A549 (cell line): ENCODE measurements at regions of chr6 and their contacts with region 1.

Region 1: DNA sequence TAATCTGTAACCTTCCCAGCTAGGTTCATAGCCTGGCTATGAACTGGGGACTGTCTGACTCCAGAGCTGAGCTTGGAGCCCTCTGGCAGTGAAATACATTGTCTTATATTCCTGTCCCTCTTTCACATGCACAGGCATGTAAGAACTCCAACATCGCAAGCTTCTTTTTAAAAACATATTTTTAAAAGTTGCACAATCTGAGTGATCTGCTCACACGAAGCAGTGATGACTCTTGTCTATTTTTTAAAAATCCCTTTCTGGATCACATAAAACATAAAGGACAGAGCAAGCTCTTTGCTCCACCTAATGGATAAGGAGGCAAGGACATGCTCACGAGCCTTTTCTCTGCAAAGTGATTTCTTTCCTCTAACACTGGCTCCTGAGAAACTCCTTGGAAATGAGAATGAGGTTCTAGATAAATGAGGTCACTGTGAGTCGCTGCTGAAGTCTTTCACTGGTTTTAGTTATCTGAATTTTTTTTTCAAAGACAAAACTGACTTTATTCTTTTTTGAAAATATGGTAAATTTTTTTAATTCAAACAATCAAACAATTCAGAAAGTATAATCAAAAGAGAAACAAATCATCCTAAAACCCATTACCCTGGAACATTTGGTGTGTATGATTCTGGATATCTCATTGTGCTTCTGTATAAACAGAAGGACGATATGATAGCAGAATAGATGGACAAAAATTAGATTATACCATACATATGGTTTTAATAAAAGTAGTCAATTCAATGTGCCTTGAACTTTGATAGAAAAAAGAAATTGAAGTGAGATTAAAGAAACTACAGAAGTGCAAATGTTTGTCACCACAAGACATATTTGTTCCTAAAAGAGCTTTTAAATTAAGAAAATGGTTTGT is 30.8 kb downstream of the IL20RA start:
- DNase-seq: peak; percentile 30 to 53
- ATAC-seq: peak; percentile 81 to 92
- H3K4me3 ChIP-seq: no peak overlapping the region
- H3K27ac ChIP-seq: no peak overlapping the region
- H3K4me1 ChIP-seq: no peaks in the 10 kb centered on the region
- CTCF ChIP-seq: peak; percentile 58
- EP300 ChIP-seq: no peak
- POLR2A ChIP-seq: no peak
- RAD21 ChIP-seq: peak; percentile 58 to 65

Region 2: DNA sequence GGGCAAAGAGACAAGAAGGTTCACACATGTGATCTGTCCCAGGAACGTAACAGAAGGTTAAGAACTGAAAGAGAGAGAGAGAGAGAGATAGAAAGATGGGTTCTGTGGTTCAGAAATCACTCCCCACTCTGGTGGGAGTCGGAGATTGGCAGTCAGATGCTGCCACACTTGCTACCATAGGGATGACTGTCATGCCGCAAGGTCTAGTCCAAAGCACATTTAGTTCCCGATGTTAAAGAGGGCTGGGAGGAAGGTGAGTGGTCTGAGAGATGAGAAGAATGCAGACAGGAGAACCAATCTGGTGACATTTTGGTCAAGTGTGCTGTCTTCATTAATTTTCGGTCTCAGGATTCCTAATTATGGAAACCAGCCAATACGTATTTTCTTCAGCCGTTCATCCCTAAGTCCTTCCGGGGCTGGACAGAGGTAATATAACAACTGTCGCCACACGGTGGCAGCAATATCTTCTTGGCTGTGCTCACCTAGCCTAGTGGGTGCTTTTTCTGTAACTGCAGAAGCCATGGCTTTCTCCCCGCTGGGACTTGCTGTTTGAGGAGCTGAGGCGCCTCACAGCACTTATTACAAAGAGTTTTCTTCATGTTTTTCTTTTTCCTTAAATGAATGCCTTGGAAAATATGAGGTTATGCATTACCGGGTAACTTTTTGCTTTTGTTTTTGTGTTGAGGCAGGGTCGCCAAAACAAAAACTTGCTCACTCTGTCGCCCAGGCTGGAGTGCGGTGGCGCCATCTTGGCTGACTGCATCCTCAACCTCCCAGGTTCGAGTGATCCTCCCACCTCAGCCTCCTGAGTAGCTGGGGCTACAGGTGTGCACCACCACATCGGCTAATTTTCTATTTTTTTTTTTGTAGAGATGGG is 45.9 kb before region 1 on chr6:
- CTCF ChIA-PET with region 1: interaction called, 56 read pairs
- POLR2A ChIA-PET with region 1: no interaction called
- DNase-seq: peak; percentile 72 to 77
- ATAC-seq: peak; percentile 97 to 100
- H3K4me3 ChIP-seq: no peak overlapping the region
- H3K27ac ChIP-seq: no peak overlapping the region; a peak in 1 of 6 replicates
- H3K4me1 ChIP-seq: no peaks in the 10 kb centered on the region
- CTCF ChIP-seq: peak; percentile 66
- EP300 ChIP-seq: no peak
- POLR2A ChIP-seq: no peak
- RAD21 ChIP-seq: peak; percentile 71 to 72

Region 3: GRCh38 chr6:137001299-137001976 is 12.5 kb before region 1 on chr6:
- CTCF ChIA-PET with region 1: interaction called, 11 read pairs
- POLR2A ChIA-PET with region 1: no interaction called
- DNase-seq: peak; percentile 31 to 53
- ATAC-seq: peak; percentile 51 to 77; a peak in 4 of 6 replicates
- H3K4me3 ChIP-seq: no peak overlapping the region
- H3K27ac ChIP-seq: peak overlapping the region; percentile 50 to 84; a peak in 5 of 6 replicates
- H3K4me1 ChIP-seq: peaks cover 20% of the 10 kb centered on the region
- CTCF ChIP-seq: no peak
- EP300 ChIP-seq: no peak
- POLR2A ChIP-seq: no peak
- RAD21 ChIP-seq: no peak

Region 4: GRCh38 chr6:137188855-137189254 is 174.9 kb after region 1 on chr6:
- CTCF ChIA-PET with region 1: no interaction called
- POLR2A ChIA-PET with region 1: no interaction called
- DNase-seq: peak in 1 of 2 experiments; percentile 38
- ATAC-seq: no peak
- H3K4me3 ChIP-seq: no peak overlapping the region
- H3K27ac ChIP-seq: no peak overlapping the region
- H3K4me1 ChIP-seq: no peaks in the 10 kb centered on the region
- CTCF ChIP-seq: no peak
- EP300 ChIP-seq: no peak
- POLR2A ChIP-seq: no peak
- RAD21 ChIP-seq: no peak